Keratinocyte (primary cell): ENCODE measurements at regions of chr16 and their contacts with region 1.

Region 1: DNA sequence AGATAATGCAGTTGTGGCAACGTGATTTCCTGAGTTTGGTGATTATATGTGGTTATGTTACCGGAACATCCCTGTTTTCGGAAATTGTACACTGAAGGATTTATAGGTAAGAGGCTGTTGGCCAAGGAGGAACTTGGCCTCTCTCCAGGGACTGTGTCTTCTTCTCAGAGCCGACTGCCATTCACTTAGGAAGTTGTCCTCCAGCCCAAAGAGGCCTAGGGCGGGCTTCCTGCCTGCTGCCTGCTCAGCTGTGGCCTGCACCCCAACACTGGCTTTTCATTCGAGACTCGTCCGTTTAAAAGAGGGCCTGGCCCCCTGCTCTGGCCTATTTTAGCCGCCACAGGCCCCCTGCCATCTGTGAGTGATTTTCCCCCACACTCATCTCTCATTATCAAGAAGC is 64.3 kb downstream of the ZDHHC7 start:
- DNase-seq: no peak
- H3K4me3 ChIP-seq: no peak overlapping the region
- H3K27ac ChIP-seq: no peak overlapping the region
- H3K4me1 ChIP-seq: no peaks in the 10 kb centered on the region
- H3K27me3 ChIP-seq: no peaks in the 10 kb centered on the region
- CTCF ChIP-seq: no peak

Region 2: GRCh38 chr16:84836234-84836647 is 110.8 kb before region 1 on chr16:
- dilution Hi-C with region 1: no loop called
- DNase-seq: peak; percentile 32
- H3K4me3 ChIP-seq: no peak overlapping the region
- H3K27ac ChIP-seq: no peak overlapping the region
- H3K4me1 ChIP-seq: peaks cover 28% of the 10 kb centered on the region
- H3K27me3 ChIP-seq: peaks cover 4% of the 10 kb centered on the region
- CTCF ChIP-seq: no peak

Region 3: DNA sequence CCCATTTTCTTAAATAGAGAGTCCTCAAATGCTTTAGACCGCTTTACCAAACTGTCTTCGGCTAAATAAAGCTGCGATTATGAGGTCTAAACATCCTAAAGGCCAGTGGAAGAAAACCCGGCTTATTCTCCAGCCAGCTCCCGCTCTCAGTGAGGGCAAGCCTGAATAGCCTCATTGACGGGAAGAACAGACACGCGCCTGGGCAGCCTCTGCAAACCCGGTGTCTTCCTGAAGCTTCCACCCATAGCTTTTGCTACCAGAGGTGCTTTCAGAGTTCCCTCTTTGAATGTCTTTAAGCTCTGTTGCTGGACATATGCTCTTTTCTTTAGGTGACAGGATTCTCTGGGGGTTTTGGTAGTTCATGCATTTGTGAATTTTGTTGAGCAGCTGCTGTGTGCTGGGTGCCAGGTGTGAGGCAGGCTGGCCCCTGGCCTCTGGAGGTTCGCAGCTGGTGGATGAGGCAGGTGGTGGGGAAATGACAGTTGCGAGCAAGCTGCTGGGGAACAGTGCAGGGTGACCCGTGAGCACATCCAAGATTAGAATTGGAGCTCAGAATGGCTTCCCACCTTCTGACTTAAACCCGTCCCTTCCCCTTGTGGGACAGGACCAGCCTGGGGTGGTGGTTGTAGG is 82.6 kb before region 1 on chr16:
- dilution Hi-C with region 1: loop called (anchors 10 kb)
- DNase-seq: no peak
- H3K4me3 ChIP-seq: no peak overlapping the region
- H3K27ac ChIP-seq: no peak overlapping the region
- H3K4me1 ChIP-seq: no peaks in the 10 kb centered on the region
- H3K27me3 ChIP-seq: no peaks in the 10 kb centered on the region
- CTCF ChIP-seq: no peak